Dendritic cell treated with granulocyte-macrophage colony-stimulating factor and Interleukin-4, amounts not matched to agents 40 ng/mL and 50 ng/mL, for 4 days (primary cell): ENCODE measurements at regions of chr7 and their contacts with region 1.

Region 1: DNA sequence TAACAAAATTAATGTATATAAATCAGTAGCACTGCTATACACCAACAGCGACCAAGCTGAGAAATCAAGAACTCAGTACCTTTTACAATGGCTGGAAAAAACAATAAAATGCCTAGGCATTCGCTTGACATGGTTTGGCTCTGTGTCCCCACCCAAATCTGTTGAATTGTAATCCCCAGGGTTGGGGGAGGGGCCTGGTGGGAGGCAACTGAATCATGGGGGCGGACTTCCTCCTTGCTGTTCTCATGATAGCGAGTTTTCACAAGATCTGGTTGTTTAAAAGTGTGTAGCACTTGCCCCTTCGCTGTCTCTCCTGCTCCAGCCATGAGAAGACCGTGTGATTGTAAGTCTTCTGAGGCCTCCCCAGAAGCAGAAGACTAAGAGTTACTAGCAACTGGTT is 8.6 kb downstream of the ZNF786 start:
- H3K4me3 Mint-ChIP-seq: no peak overlapping the region
- H3K27ac Mint-ChIP-seq: no peak overlapping the region
- H3K4me1 Mint-ChIP-seq: peaks cover 15% of the 10 kb centered on the region
- H3K27me3 Mint-ChIP-seq: no peaks in the 10 kb centered on the region

Region 2: GRCh38 chr7:148856891-148857290 is 225.0 kb before region 1 on chr7:
- intact Hi-C with region 1: loop called (anchors 10 kb)
- H3K4me3 Mint-ChIP-seq: peak overlapping the region; percentile 34
- H3K27ac Mint-ChIP-seq: peak overlapping the region; percentile 62
- H3K4me1 Mint-ChIP-seq: peaks cover 31% of the 10 kb centered on the region
- H3K27me3 Mint-ChIP-seq: no peaks in the 10 kb centered on the region

Region 3: DNA sequence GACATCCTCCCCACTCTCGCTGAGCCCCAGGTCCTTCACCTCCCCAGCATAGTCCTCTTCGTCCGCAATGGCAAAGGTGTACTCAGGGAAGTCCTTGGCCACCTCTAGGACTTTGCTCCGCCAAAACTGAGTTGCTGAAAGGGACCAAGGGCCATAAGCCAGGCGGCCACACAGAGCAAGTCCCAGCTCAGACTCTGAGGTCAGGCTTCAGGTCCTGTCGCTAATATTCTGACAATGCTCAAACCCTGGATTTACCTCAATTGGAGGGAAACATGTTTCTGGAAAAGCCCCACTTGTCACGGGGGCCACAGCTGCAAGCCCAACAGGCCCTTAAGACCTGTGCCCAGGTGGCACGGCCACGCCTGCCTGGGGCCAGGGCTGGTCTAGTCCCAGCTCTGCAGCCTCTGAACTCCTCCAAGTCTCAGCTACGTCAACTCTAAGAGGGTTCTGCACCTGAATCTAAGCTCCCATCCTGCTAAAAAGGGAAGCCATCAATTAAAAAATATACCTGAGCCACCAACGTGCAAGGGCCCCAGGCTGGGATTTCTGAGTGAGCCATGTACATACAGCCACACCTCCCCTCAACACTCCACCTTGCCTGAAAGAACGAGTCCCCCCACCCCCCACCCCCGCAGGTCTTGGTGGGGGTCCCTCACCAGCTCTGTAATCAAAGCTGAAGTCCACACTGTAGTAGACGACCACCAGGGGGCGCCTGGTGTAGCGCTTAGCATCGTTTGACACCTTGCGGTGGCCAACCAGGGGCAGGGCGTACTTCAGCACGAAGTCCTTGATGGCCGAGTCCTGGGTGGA is 76.5 kb before region 1 on chr7:
- intact Hi-C with region 1: no loop called
- H3K4me3 Mint-ChIP-seq: no peak overlapping the region
- H3K27ac Mint-ChIP-seq: no peak overlapping the region
- H3K4me1 Mint-ChIP-seq: no peaks in the 10 kb centered on the region
- H3K27me3 Mint-ChIP-seq: no peaks in the 10 kb centered on the region

Region 4: DNA sequence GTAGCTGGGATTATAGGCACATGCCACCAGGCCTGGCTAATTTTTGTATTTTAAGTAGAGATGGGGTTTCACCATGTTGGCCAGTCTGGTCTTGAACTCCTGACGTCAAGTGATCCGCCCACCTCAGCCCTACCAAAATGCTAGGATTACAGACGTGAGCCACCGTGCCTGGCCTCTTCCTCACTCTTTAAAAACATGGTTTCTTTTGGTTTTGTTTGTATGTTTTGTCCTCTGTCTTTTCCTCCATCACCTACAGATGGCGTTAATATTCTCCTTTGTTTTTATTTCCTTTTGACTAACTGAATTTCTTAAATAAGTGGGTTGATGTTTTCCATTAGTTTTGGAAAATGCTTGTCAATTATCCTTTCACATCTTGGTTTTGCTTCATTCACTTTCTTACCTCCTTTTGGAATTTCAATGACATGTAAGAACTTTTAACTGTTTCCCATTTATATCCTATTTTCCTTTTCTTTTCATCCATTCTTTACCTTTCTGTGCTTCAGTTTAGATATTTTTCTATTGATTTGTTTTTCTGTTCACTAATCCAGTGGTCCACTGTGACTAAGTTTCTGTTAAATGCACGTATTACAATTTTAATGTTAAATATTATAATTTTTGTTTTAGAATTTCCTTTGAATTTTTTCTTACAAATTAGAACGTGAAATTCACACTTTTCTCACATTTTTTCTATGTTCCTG is 587.4 kb after region 1 on chr7:
- intact Hi-C with region 1: no loop called
- H3K4me3 Mint-ChIP-seq: no peak overlapping the region
- H3K27ac Mint-ChIP-seq: no peak overlapping the region
- H3K4me1 Mint-ChIP-seq: no peaks in the 10 kb centered on the region
- H3K27me3 Mint-ChIP-seq: peaks cover 22% of the 10 kb centered on the region